Right ventricle myocardium inferior (tissue), 1 donor: ENCODE measurements at regions of chr6 and their contacts with region 1.

Region 1: GRCh38 chr6:136103763-136104311 is 146.3 kb downstream of the MTFR2 start:
- DNase-seq: peak; percentile 72
- ATAC-seq: peak; percentile 98

Region 2: DNA sequence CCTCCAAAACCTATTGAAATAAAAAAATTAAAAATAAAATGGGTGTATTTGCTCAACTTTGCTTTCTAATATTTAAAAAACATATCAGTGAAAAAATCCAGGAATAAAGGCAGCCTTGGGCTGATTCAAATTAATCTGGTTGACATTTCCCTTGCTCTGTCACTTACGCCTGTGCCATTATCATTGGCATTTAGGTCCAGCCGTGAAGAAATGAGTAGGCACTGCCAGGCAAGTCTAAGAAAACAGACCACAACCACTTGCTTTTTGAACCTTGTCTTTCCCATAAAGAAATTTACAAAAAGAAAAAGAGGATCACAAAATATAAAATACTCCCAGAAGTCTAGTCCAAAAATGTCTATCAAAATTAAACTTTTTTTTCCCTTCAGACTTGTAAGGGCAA is 990.0 kb before region 1 on chr6:
- intact Hi-C with region 1: no loop called
- DNase-seq: no peak
- ATAC-seq: no peak

Region 3: DNA sequence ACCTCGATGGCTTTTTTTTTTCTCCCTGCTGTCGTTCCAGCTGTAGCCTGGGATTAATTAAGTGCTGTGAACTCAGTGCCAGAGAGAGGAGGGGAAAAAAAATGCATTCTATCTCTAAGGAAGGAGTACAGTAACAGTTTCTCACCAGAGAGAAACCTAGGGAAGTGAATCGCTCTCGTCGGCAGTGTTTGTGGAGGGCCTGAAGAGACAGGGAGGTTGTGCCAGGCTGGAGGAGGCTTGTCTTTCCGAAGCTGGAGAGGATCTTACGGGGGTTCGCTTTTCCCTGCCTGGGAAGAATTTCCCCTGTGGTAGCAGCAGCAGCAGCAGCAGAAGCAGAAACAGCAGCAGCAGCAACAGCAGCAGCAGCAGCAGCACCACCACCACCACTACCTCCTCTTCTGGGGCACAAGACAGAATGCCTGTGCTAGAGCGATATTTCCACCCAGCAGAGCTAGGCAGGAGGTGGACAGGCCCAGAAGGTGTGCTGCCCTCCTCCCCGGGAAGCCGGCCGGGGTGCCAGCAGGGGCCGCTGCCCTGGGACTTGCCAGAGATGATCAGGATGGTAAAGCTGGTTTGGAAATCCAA is 65.9 kb before region 1 on chr6:
- intact Hi-C with region 1: loop called (anchors 2 kb)
- DNase-seq: no peak
- ATAC-seq: peak; percentile 69

Region 4: GRCh38 chr6:136051140-136051775 is 52.6 kb before region 1 on chr6:
- intact Hi-C with region 1: no loop called
- DNase-seq: no peak
- ATAC-seq: no peak

Region 5: GRCh38 chr6:136077834-136078576 is 25.8 kb before region 1 on chr6:
- intact Hi-C with region 1: loop called (anchors 2 kb)
- DNase-seq: no peak
- ATAC-seq: peak; percentile 57

Region 6: GRCh38 chr6:136158387-136158821 is 54.6 kb after region 1 on chr6:
- intact Hi-C with region 1: loop called (anchors 2 kb)
- DNase-seq: peak; percentile 82
- ATAC-seq: peak; percentile 95